ENCODE measurements at regions of chr16 and their contacts with region 1.

Region 1: DNA sequence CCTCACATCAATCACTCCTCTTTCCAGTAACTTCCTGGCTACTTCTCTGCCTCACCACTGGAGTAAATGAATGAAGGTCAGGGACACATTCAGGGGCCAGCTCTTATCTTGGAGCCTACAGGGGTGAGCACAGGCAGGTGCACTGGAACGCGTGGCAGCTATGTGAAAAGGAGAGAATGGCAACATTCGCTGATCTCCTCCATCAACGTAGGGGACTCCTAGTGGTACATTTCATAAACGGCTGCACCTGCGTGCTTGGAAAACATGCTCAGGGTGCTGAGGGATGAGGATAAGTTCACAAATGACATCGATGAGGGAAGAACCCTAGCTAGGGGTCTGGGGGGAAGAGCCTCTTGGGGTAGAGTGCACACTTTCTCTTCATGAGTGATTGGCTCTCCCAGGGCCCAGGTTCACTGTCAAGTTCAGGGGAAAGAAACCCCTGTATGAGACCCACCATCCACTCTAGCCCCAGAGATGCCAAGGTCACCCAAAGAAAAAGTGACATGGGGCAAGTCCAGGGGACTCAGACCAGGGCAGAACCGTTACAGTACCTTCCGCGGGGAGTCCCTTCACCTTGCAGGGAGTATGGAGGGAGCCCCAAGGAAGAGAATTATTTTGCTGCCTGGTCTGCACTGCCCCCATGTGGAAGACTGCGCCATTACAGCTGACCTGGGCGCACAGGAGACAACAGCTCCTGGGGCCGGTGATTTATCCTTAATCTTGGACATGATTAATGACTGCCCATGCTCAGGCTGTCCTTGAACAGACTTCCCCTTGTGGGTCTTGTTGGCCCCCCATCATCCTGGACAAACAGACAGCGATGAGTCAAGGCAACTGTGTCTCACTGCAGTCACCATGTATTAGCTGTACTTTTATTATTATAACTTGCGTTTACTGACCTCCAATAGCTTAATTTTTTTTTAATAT is 30.1 kb downstream of the VAC14 start:
- DNase-seq: no peak
- H3K4me3 ChIP-seq: no peak overlapping the region
- H3K27me3 ChIP-seq: no peaks in the 10 kb centered on the region
- CTCF ChIP-seq: peak; percentile 96

Region 2: GRCh38 chr16:70660672-70661350 is 110.1 kb before region 1 on chr16:
- CTCF ChIA-PET with region 1: interaction called, 63 read pairs
- POLR2A ChIA-PET with region 1: no interaction called
- DNase-seq: no peak
- H3K4me3 ChIP-seq: no peak overlapping the region
- H3K27me3 ChIP-seq: no peaks in the 10 kb centered on the region
- CTCF ChIP-seq: no peak

Region 3: GRCh38 chr16:70679666-70680494 is 91.0 kb before region 1 on chr16:
- CTCF ChIA-PET with region 1: interaction called, 117 read pairs
- POLR2A ChIA-PET with region 1: interaction called, 11 read pairs
- DNase-seq: no peak
- H3K4me3 ChIP-seq: no peak overlapping the region
- H3K27me3 ChIP-seq: no peaks in the 10 kb centered on the region
- CTCF ChIP-seq: 0 out of 2 replicates have a peak, but pooled peaks have one; percentile 18

Region 4: DNA sequence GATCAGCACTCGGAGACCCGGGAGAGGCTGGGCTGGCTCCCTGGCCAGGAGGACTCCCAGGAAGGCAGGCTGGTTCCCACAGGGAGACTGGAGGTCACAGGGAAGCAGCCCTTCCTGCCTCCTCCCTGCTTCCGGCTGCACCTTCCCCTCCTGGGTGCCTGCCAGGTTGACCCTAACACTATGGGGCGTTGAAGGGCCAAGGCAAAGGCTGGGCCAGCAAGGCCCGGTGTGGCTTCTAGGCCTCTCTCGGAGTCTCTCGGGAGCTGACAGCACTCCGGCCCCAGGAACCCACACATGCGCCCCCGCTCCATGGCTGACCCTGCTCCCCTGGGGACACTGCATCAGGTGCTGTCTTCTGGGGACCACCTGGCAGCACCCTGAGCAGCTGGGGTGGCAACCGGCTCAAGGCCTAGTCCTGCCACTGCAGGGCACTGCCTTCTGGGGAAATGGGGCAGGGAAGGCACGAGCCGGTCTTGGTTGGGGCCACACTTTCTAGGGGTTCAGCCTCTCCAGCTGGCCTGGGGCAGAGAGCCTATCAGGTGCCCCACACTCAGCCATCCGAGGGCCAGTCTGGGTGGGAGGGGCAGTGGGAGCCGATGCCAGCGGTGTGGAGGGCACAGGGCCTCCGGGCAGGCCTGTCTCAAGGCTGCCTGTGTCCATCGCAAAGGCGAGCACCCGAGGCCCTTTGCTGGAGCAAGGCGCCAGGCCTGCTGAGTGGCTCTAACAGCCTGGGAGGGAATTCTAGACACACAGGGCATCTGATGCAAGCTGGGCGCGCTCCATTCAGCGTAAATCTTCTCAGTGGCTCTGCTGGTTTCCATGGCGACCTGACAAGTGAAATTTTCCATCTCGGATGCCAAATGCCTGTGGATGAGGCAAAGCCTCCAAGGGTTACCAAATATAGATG is 79.4 kb before region 1 on chr16:
- CTCF ChIA-PET with region 1: interaction called, 64 read pairs
- POLR2A ChIA-PET with region 1: interaction called, 10 read pairs
- DNase-seq: peak; percentile 96
- H3K4me3 ChIP-seq: no peak overlapping the region
- H3K27me3 ChIP-seq: no peaks in the 10 kb centered on the region
- CTCF ChIP-seq: no peak

Region 5: DNA sequence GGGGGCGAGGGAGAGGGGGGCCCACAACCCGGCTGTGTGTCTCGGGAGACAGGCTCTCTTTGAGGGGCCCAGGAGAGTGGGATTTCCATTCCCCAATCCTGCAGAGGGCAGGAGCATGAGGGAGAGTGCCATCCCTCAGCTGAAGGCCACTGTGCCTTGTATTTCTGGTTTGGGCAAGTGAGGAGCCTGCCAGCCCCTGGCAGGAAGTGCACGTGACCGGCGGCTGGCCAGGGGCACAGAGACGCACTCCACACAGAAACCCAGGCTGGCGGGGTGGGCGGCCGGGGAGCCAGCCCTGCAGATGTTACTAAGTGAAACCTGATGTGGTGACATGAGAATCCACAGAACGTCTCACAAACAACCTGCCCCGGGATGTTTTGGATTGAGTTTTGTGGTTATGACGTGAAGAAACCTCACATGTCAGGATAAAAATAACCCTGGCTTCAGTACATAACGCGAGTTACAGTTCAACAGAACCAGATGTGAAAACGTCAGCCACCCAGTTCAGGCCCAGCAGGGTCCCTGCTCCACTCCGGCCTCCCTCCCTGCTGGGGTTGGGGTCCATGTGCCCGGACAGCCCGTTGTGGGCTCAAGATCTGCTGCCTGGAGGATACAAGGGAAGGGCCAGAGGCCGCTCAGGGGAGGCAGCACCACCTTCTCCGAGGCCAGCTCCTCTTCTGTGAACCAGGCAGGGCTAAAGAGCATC is 33.4 kb before region 1 on chr16:
- CTCF ChIA-PET with region 1: interaction called, 26 read pairs
- POLR2A ChIA-PET with region 1: no interaction called
- DNase-seq: peak; percentile 97
- H3K4me3 ChIP-seq: no peak overlapping the region
- H3K27me3 ChIP-seq: no peaks in the 10 kb centered on the region
- CTCF ChIP-seq: no peak

Region 6: DNA sequence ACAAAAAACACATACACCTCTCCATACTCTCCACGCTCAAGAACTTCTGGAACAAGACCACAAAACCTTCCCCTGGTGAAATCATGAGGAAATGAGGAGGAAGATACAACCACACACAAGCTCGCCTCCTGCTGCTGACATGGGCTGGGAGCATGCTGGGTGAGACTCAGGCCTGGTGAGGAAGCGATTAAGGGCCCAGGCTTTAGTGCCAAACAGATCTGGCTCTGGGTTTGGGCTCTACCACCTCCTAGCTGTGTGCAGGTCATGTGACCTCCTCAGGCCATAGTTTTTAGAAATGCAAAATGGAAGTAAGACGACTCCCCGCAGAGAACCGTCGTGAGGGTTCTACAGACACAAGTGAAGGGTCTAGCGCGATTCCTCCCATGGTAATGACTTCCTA is 11.2 kb before region 1 on chr16:
- CTCF ChIA-PET with region 1: interaction called, 62 read pairs
- POLR2A ChIA-PET with region 1: no interaction called
- DNase-seq: no peak
- H3K4me3 ChIP-seq: no peak overlapping the region
- H3K27me3 ChIP-seq: no peaks in the 10 kb centered on the region
- CTCF ChIP-seq: no peak